Activated CD4-positive, alpha-beta memory T cell treated with anti-CD3 and anti-CD28 coated beads for 36 hours (primary cell): ENCODE measurements at regions of chr7 and their contacts with region 1.

Region 1: GRCh38 chr7:114865564-114865963 is 56.3 kb upstream of the MDFIC start:
- DNase-seq: peak; percentile 74
- H3K4me3 Mint-ChIP-seq: no peak overlapping the region
- H3K27ac Mint-ChIP-seq: no peak overlapping the region
- H3K4me1 Mint-ChIP-seq: peaks cover 7% of the 10 kb centered on the region
- H3K27me3 Mint-ChIP-seq: no peaks in the 10 kb centered on the region

Region 2: DNA sequence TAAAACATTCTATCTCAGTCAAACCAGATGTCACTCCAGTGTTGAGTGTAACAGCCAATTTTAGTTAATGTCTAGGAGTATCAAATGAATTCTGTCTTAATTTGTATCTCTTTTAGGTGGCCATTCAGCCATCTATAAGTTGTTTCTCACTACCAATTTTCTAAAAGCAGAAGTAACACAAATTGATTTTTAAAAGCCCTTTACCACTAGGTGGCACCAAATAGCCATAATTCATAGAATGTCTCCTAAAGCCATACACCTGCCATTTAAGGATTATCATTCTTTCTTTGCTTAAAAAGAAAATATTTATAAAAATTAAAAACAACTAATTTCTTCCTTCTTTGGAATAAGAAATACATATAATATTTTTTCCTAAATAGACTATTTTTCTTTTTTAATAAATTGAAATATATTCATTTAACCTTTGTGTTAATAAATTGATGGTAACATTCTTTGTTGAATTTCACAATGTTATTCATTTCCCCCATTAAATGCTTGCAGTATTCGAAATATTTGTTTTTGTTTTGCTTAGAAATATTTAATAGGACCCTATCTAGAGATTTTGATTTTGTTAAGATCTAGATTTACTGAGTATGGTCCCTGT is 839.0 kb before region 1 on chr7:
- CTCF ChIA-PET with region 1: interaction called, 3 read pairs
- POLR2A ChIA-PET with region 1: no interaction called
- intact Hi-C with region 1: loop called (anchors 5 kb)
- DNase-seq: no peak
- H3K4me3 Mint-ChIP-seq: no peak overlapping the region
- H3K27ac Mint-ChIP-seq: no peak overlapping the region
- H3K4me1 Mint-ChIP-seq: no peaks in the 10 kb centered on the region
- H3K27me3 Mint-ChIP-seq: peaks cover 5% of the 10 kb centered on the region

Region 3: GRCh38 chr7:114622221-114622620 is 243.3 kb before region 1 on chr7:
- CTCF ChIA-PET with region 1: no interaction called
- POLR2A ChIA-PET with region 1: no interaction called
- intact Hi-C with region 1: no loop called
- DNase-seq: no peak
- H3K4me3 Mint-ChIP-seq: no peak overlapping the region
- H3K27ac Mint-ChIP-seq: no peak overlapping the region
- H3K4me1 Mint-ChIP-seq: no peaks in the 10 kb centered on the region
- H3K27me3 Mint-ChIP-seq: no peaks in the 10 kb centered on the region

Region 4: GRCh38 chr7:114854369-114854768 is 11.2 kb before region 1 on chr7:
- CTCF ChIA-PET with region 1: interaction called, 13 read pairs
- POLR2A ChIA-PET with region 1: no interaction called
- intact Hi-C with region 1: no loop called
- DNase-seq: no peak
- H3K4me3 Mint-ChIP-seq: no peak overlapping the region
- H3K27ac Mint-ChIP-seq: no peak overlapping the region
- H3K4me1 Mint-ChIP-seq: peaks cover 5% of the 10 kb centered on the region
- H3K27me3 Mint-ChIP-seq: no peaks in the 10 kb centered on the region

Region 5: GRCh38 chr7:114930829-114931655 is 65.5 kb after region 1 on chr7:
- CTCF ChIA-PET with region 1: interaction called, 10 read pairs
- POLR2A ChIA-PET with region 1: no interaction called
- intact Hi-C with region 1: no loop called
- DNase-seq: no peak
- H3K4me3 Mint-ChIP-seq: peak overlapping the region; percentile 67
- H3K27ac Mint-ChIP-seq: no peak overlapping the region
- H3K4me1 Mint-ChIP-seq: peaks cover 38% of the 10 kb centered on the region
- H3K27me3 Mint-ChIP-seq: no peaks in the 10 kb centered on the region

Region 6: GRCh38 chr7:115217373-115217772 is 351.8 kb after region 1 on chr7:
- CTCF ChIA-PET with region 1: interaction called, 54 read pairs
- POLR2A ChIA-PET with region 1: no interaction called
- intact Hi-C with region 1: loop called (anchors 1 kb)
- DNase-seq: no peak
- H3K4me3 Mint-ChIP-seq: no peak overlapping the region
- H3K27ac Mint-ChIP-seq: no peak overlapping the region
- H3K4me1 Mint-ChIP-seq: peaks cover 10% of the 10 kb centered on the region
- H3K27me3 Mint-ChIP-seq: no peaks in the 10 kb centered on the region

Region 7: GRCh38 chr7:115679976-115680375 is 814.4 kb after region 1 on chr7:
- CTCF ChIA-PET with region 1: interaction called, 14 read pairs
- POLR2A ChIA-PET with region 1: no interaction called
- intact Hi-C with region 1: loop called (anchors 1 kb)
- DNase-seq: no peak
- H3K4me3 Mint-ChIP-seq: no peak overlapping the region
- H3K27ac Mint-ChIP-seq: no peak overlapping the region
- H3K4me1 Mint-ChIP-seq: no peaks in the 10 kb centered on the region
- H3K27me3 Mint-ChIP-seq: no peaks in the 10 kb centered on the region

Region 8: DNA sequence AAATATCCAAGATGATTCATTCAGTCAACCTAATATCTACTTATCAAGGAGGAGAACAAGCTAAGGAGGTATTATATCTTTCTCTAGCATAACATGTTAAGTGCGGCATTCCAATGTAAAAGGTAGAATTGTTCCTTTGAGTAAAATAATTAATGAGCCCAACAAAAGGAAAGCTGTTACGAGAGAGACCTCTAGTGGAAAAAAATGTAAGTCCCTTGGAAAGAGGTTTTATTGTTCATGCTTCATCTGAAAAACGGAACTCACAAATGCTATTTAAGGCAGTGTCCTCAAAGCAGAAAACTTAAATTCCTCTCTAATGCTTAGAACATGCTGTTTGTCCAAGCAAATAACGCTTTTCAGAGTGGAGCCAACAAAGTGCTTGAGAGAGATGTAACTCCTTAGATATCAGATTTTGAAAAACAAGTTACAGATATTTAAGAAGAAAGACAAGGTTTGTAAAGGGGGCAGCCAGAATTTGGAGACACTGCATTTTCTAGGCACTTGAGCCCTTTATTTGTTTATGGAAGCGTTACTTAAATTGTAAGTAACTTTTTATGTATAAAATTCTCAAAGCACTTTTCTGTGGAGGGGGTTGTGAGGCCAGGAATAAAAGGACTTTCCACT is 1045.1 kb after region 1 on chr7:
- CTCF ChIA-PET with region 1: interaction called, 5 read pairs
- POLR2A ChIA-PET with region 1: no interaction called
- intact Hi-C with region 1: loop called (anchors 5 kb)
- DNase-seq: no peak
- H3K4me3 Mint-ChIP-seq: no peak overlapping the region
- H3K27ac Mint-ChIP-seq: no peak overlapping the region
- H3K4me1 Mint-ChIP-seq: no peaks in the 10 kb centered on the region
- H3K27me3 Mint-ChIP-seq: peaks cover 7% of the 10 kb centered on the region